Endothelial cell of umbilical vein (primary cell): ENCODE measurements at regions of chr4 and their contacts with region 1.

Region 1: DNA sequence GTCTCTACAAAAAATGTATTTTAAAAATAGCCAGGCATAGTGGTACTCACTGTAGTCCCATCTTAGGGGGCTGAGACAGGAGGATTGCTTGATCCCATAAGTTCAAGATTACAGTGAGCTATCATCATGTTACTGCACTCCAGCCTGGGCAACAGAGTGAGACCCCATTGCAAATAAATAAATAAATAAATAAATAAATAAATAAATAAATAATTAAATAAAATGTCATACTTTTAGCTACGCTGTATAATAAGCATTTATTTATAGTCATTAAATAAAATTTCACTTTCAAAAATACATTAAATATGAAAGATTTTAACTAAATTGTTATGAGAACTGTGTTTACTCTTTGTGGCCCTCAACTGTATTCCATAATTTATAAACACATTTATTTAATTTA is 1124.2 kb downstream of the PCDH7 start:
- DNase-seq: no peak
- H3K4me3 ChIP-seq: no peak overlapping the region
- H3K27ac ChIP-seq: no peak overlapping the region
- H3K4me1 ChIP-seq: no peaks in the 10 kb centered on the region
- H3K27me3 ChIP-seq: no peaks in the 10 kb centered on the region
- CTCF ChIP-seq: no peak
- POLR2A ChIP-seq: no peak

Region 2: DNA sequence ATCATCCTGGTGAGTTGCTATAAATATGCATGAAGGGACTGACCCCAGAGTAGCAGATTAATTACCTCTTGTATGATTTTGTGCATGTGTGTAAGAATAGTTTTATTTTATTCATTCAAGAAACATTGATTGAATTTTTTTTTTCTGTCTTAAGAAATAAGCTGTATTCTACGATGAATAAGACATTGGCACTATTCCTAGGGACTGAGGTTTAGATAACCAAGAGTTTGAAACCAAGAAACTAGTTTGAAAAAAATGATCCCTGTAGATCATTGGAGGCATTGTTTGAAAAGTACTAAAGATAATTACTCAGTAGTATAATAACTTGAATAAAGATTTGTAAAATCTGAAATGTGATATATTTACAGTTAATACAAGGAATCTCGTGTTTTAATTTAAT is 37.3 kb before region 1 on chr4:
- CTCF ChIA-PET with region 1: no interaction called
- POLR2A ChIA-PET with region 1: no interaction called
- dilution Hi-C with region 1: no loop called
- intact Hi-C with region 1: loop called (anchors 1 kb)
- DNase-seq: no peak
- H3K4me3 ChIP-seq: no peak overlapping the region
- H3K27ac ChIP-seq: no peak overlapping the region
- H3K4me1 ChIP-seq: no peaks in the 10 kb centered on the region
- H3K27me3 ChIP-seq: no peaks in the 10 kb centered on the region
- CTCF ChIP-seq: no peak
- POLR2A ChIP-seq: no peak